ENCODE measurements at regions of chr6 and their contacts with region 1.

Region 1: DNA sequence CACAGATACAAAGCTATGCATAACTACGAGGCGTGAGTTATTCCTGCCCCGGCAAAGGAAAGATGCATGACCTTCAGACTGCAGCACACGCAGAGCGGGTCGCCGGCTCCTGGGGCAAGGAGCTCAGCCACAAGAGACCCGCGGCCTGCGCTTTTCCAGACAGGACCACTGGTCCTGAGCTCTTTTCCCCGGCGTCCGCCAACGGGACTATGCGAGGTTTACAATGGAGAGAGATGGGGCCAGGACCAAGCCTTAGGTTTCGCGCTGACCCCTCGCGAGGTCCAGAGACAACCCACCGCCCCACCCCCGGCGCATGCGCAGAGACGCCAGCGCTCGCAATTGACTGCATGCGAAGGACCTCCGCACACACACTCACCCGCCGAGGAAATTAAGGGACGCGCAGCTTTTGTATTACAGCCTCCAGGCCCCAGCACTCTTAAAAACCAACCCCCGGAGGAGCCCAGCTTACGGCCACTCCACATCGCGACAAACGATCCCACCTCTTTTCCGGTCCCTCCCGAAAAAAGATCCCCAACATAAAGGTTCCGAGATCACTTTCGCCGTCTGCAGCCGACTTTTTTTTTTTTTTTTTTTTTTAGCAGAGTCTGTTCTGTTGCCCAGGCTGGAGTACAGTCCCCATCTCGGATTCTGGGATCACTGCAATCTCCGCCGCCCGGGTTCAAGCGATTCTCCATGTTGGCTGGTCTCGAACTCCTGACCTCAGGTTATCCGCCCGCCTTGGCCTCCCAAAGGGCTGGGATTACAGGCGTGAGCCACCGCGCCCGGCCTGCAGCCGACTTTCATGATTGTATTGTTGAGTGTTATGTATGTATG is at the start of gene COQ3:
- DNase-seq: peak; percentile 28 to 79 (median 65)
- ATAC-seq: peak; percentile 70
- H3K4me3 ChIP-seq: peak within 1 kb of the TSS; percentile 73 to 94
- H3K4me3 Mint-ChIP-seq: peak within 1 kb of the TSS; percentile 95
- H3K27ac ChIP-seq: peak within 1 kb of the TSS; percentile 57 to 62
- H3K27ac Mint-ChIP-seq: peak within 1 kb of the TSS; percentile 91
- H3K4me1 ChIP-seq: peaks cover 5% of the 10 kb centered on the region
- H3K4me1 Mint-ChIP-seq: peaks cover 25% of the 10 kb centered on the region
- H3K27me3 ChIP-seq: no peaks in the 10 kb centered on the region
- H3K27me3 Mint-ChIP-seq: no peaks in the 10 kb centered on the region
- CTCF ChIP-seq: no peak
- total RNA-seq, gene COQ3: 1.6 to 1.9 TPM

Region 2: DNA sequence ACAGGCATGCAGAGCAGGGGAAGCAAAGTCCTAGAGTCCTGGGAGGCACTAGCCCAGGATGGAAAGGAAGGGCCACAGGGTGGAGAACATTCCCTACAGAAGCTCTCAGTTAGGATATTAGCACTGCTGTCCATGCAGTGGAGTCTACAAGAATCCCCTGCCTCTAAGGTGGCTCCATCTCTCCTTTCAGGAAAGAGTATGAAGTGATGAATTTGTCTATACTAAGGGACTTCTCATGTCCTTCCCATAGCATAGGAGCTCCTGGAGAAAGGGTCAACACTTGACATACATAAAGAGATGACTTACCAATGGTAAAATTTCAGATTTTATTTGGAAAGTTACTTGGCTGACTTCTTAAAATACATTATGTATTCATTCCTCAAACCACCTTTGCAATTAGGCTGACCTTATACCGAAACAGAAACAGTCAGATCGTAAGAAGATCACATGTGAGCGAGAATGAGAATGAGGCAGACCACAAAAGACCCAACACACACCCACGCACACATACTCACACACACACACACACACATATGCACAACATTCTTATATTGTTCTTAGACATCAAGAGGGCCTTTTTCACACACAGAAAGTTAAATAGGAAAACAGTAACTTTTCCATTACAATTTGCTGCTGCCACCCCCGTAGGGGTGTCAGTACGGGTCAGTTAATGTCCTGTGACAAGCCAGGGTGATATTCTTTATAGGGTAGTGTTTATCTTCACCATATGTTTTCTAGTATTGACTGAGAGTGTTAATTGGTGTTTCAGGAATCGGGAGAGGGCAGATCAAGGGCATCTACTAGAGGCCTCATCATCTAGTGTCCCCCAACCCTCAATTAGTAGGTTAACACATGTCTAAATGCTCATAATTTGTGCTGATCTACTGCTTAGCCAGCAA is 203.8 kb before region 1 on chr6:
- CTCF ChIA-PET with region 1: no interaction called
- POLR2A ChIA-PET with region 1: no interaction called
- intact Hi-C with region 1: no loop called
- DNase-seq: no peak
- ATAC-seq: no peak
- H3K4me3 ChIP-seq: no peak overlapping the region
- H3K4me3 Mint-ChIP-seq: no peak overlapping the region
- H3K27ac ChIP-seq: no peak overlapping the region
- H3K27ac Mint-ChIP-seq: no peak overlapping the region
- H3K4me1 ChIP-seq: no peaks in the 10 kb centered on the region
- H3K4me1 Mint-ChIP-seq: no peaks in the 10 kb centered on the region
- H3K27me3 ChIP-seq: no peaks in the 10 kb centered on the region
- H3K27me3 Mint-ChIP-seq: peaks cover 8% of the 10 kb centered on the region
- CTCF ChIP-seq: no peak

Region 3: GRCh38 chr6:99520855-99521632 is 127.1 kb after region 1 on chr6:
- CTCF ChIA-PET with region 1: interaction called, 3 read pairs
- POLR2A ChIA-PET with region 1: no interaction called
- intact Hi-C with region 1: loop called in 1 of 2 experiments (anchors 10 kb)
- DNase-seq: peak; percentile 37 to 83 (median 66)
- ATAC-seq: peak; percentile 91
- H3K4me3 ChIP-seq: peak overlapping the region; percentile 79 to 94
- H3K4me3 Mint-ChIP-seq: peak overlapping the region; percentile 96
- H3K27ac ChIP-seq: peak overlapping the region; percentile 48 to 74
- H3K27ac Mint-ChIP-seq: peak overlapping the region; percentile 92
- H3K4me1 ChIP-seq: peaks cover 12% of the 10 kb centered on the region
- H3K4me1 Mint-ChIP-seq: peaks cover 41% of the 10 kb centered on the region
- H3K27me3 ChIP-seq: no peaks in the 10 kb centered on the region
- H3K27me3 Mint-ChIP-seq: no peaks in the 10 kb centered on the region
- CTCF ChIP-seq: peak; percentile 89

Region 4: DNA sequence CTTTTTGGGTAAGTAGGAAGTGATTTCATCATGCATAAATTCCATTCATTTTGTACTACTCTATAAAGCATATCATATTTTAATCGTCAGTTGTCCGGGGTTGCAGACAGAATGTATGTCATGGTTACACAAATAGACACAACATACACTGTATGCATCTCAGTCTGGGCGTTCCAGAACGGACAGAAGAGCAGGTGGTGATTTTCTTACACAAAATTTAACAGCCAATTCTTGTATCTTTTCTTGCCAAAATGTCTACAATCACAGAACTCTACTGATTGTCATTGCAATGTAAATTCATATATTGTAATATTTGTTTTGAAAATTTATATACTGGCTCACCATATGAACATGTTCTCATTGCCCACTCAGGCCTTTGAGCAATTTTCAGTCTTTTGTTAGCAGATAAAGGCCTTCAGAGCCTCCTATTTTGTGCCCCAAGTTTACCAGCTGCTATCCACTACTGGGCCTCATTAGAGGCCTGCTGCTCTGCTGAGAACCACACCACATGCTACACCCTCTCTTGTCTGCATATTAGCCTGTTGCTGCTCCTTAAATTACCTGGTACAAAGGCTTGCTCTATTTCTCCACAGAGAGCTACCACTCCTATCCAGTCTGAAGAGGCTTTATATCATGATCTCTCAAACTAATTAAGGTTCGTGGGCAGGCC is 274.3 kb after region 1 on chr6:
- CTCF ChIA-PET with region 1: no interaction called
- POLR2A ChIA-PET with region 1: no interaction called
- intact Hi-C with region 1: no loop called
- DNase-seq: no peak
- ATAC-seq: no peak
- H3K4me3 ChIP-seq: no peak overlapping the region
- H3K4me3 Mint-ChIP-seq: no peak overlapping the region
- H3K27ac ChIP-seq: no peak overlapping the region
- H3K27ac Mint-ChIP-seq: no peak overlapping the region
- H3K4me1 ChIP-seq: no peaks in the 10 kb centered on the region
- H3K4me1 Mint-ChIP-seq: no peaks in the 10 kb centered on the region
- H3K27me3 ChIP-seq: no peaks in the 10 kb centered on the region
- H3K27me3 Mint-ChIP-seq: peaks cover 4% of the 10 kb centered on the region
- CTCF ChIP-seq: no peak

Measured in CD8-positive, alpha-beta T cell (primary cell).